HCT116 (cell line): ENCODE measurements at regions of chr19 and their contacts with region 1.

Region 1: DNA sequence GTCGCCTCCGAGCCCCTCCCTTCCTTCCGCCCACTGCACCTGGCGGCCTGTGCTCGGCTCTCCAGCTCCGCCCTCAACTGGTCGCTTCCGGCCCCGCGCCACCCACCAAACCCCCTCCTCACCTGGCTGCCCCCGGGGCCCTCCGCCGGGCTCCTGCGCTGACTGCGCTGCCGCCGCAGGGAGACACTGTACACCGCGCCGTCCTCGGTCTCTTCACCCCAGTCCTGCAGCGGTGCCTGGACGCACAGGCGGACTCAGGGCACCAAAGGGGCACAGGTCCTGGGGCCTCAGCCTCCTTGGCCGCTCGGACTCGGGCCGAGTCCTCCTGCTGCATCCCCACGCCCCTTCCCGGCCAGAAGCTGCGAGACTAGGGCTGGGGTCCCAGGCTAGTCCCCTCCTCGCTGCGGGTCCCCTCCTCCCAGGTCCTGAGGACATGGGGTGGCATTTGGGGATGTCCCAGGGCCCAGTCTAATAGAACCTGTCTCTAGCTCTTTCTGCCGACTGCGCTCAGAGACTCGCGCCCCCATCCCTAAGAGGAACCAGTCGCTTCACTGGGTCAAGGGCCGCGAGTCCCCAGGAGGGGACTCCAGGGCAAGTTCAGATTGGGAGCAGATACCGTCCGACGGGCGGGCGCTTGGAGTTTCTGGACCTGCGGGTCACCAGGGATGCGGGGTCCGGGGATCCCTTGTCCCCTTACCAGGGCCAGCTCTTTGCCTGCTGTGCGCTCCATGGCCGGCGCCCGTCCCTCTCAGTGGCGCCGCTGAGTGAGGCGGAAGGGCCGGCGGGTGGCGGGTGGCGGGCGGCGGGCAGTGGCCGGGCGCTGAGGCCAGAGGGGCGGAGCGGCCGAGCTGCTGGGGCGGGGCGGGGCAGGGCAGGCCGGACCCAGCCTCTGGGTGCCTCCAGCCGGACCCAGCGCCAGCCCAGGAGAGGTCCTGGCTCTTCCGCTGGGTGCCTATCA is at the start of gene RGL3:
- DNase-seq: no peak
- ATAC-seq: peak; percentile 84
- H3K4me3 ChIP-seq: peak within 1 kb of the TSS; percentile 93 to 99
- H3K27ac ChIP-seq: peak within 1 kb of the TSS; percentile 99
- H3K4me1 ChIP-seq: peaks cover 9 to 16% of the 10 kb centered on the region in 2 experiments
- H3K27me3 ChIP-seq: no peaks in the 10 kb centered on the region
- CTCF ChIP-seq: no peak
- POLR2A ChIP-seq: no peak
- RAD21 ChIP-seq: no peak
- total RNA-seq, gene RGL3: 99.2 TPM

Region 2: DNA sequence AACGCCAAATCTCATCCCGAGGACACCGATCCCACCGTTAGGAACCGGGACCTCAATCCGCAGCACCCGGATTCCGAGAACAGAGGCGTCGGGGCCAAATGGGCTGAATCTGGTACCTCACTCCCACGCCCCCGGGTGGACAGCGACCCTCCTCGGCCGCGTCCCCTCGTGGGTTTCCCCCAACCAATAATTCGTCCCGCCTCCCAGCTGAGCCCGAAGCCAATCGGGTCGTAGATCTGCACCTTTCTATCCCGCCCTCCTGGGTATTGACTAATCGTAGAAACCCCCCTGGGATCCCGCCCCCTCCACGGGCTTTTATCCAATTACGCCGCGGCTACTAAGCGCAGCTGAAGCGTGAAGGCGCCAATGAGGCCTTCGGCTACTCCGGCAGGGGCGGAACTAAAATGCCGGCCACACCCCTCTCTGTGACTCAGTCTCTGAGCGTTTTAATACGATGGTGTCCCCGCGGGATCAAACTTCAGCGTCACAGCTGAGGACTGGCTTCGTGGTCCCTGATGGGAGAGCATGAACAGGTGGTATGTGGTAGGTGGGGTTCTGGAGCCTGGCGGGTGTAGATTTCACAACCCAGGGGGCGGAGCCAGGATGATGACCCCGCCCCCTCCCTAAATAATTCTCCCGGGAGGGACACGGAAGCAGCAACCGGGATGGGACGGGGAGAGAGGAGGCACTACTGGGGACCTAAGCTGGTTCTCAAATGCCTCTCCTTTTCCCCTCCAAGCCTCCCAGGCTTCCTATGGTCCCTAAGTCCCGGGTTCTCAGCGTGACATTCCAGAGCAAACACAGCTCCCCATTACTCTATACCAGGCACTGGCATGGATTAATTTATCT is 72.5 kb before region 1 on chr19 and contains the starts of genes CCDC159 and TMEM205:
- CTCF ChIA-PET with region 1: no interaction called
- POLR2A ChIA-PET with region 1: interaction called, 5 read pairs
- RAD21 ChIA-PET with region 1: interaction called in 1 of 2 experiments, 12 read pairs
- intact Hi-C with region 1: no loop called
- DNase-seq: peak; percentile 100
- ATAC-seq: peak; percentile 91
- H3K4me3 ChIP-seq: peak within 1 kb of the TSS; percentile 86 to 88
- H3K27ac ChIP-seq: peak within 1 kb of the TSS; percentile 67
- H3K4me1 ChIP-seq: peaks cover 25 to 51% of the 10 kb centered on the region in 2 experiments
- H3K27me3 ChIP-seq: no peaks in the 10 kb centered on the region
- CTCF ChIP-seq: no peak
- POLR2A ChIP-seq: peak; percentile 43
- RAD21 ChIP-seq: no peak
- total RNA-seq, gene CCDC159: 7.7 TPM
- total RNA-seq, gene TMEM205: 55.9 TPM

Region 3: GRCh38 chr19:11364935-11365334 is 53.9 kb before region 1 on chr19:
- CTCF ChIA-PET with region 1: no interaction called
- POLR2A ChIA-PET with region 1: no interaction called
- RAD21 ChIA-PET with region 1: no interaction called
- intact Hi-C with region 1: no loop called
- DNase-seq: no peak
- ATAC-seq: no peak
- H3K4me3 ChIP-seq: no peak overlapping the region
- H3K27ac ChIP-seq: no peak overlapping the region
- H3K4me1 ChIP-seq: peaks cover 5 to 9% of the 10 kb centered on the region in 2 experiments
- H3K27me3 ChIP-seq: no peaks in the 10 kb centered on the region
- CTCF ChIP-seq: no peak
- POLR2A ChIP-seq: no peak
- RAD21 ChIP-seq: no peak